Mammary epithelial cell (primary cell): ENCODE measurements at regions of chr3 and their contacts with region 1.

Region 1: GRCh38 chr3:197749601-197750395 is at the start of gene FYTTD1:
- DNase-seq: peak; percentile 80
- H3K4me3 ChIP-seq: peak within 1 kb of the TSS; percentile 61 to 87 (median 81)
- H3K27ac ChIP-seq: peak within 1 kb of the TSS; percentile 66
- H3K4me1 ChIP-seq: peaks cover 20% of the 10 kb centered on the region
- H3K27me3 ChIP-seq: no peaks in the 10 kb centered on the region
- CTCF ChIP-seq: peak; percentile 18 to 42
- total RNA-seq, gene FYTTD1: 49.0 to 59.6 TPM

Region 2: DNA sequence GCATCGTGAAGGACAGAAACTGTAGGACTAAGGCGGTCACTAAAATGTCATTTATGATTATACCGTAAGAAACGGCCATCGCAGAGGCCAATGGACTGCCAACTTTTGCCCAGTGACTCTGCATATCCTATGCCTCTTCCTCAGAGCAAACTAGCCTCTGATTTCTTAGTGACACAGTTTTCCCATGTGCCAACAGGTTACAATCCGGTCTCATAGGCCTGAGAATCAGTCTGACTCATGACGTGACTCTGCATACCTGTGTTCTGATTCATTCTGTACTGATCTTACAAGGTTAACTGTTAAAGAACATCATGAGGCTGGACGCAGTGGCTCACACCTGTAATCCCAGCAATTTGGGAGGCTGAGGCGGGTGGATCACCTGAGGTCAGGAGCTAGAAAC is 30.9 kb before region 1 on chr3:
- CTCF ChIA-PET with region 1: no interaction called
- dilution Hi-C with region 1: no loop called
- in situ Hi-C with region 1: no loop called
- intact Hi-C with region 1: loop called (anchors 1 kb)
- DNase-seq: peak; percentile 99
- H3K4me3 ChIP-seq: no peak overlapping the region
- H3K27ac ChIP-seq: peak overlapping the region; percentile 97
- H3K4me1 ChIP-seq: peaks cover 20% of the 10 kb centered on the region
- H3K27me3 ChIP-seq: no peaks in the 10 kb centered on the region
- CTCF ChIP-seq: no peak

Region 3: GRCh38 chr3:197801891-197802778 is 52.3 kb after region 1 on chr3:
- CTCF ChIA-PET with region 1: no interaction called
- dilution Hi-C with region 1: no loop called
- in situ Hi-C with region 1: no loop called
- intact Hi-C with region 1: loop called (anchors 1 kb)
- DNase-seq: peak; percentile 60
- H3K4me3 ChIP-seq: no peak overlapping the region
- H3K27ac ChIP-seq: peak overlapping the region; percentile 13
- H3K4me1 ChIP-seq: peaks cover 11% of the 10 kb centered on the region
- H3K27me3 ChIP-seq: no peaks in the 10 kb centered on the region
- CTCF ChIP-seq: peak; percentile 43 to 58